PC-9 (cell line): ENCODE measurements at regions of chr4 and their contacts with region 1.

Region 1: DNA sequence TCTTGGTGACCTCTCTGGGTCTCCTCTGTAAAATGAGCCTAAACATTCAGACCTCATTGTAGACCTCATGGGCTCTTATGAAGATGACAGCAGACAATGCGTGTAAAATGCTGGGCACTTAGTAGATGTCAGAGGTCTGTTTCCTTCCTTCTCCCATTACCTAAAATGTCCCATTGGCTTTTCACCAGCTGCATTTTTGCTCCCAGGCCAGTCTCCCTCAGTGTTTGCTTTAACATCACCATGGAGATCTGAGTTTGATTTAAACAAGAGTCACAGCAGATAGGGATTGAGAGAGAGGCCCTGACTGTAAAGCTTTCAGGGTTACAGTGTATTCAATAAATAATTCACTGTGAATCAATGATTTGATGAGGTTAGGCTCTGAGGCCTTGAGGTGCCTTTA is 24.3 kb downstream of the PSAPL1 start:
- DNase-seq: no peak
- H3K4me3 ChIP-seq: no peak overlapping the region
- H3K27ac ChIP-seq: no peak overlapping the region
- H3K4me1 ChIP-seq: no peaks in the 10 kb centered on the region
- H3K27me3 ChIP-seq: no peaks in the 10 kb centered on the region
- CTCF ChIP-seq: no peak

Region 2: GRCh38 chr4:7424553-7425111 is 14.2 kb after region 1 on chr4:
- CTCF ChIA-PET with region 1: no interaction called
- POLR2A ChIA-PET with region 1: interaction called, 14 read pairs
- intact Hi-C with region 1: no loop called
- DNase-seq: no peak
- H3K4me3 ChIP-seq: no peak overlapping the region
- H3K27ac ChIP-seq: no peak overlapping the region
- H3K4me1 ChIP-seq: no peaks in the 10 kb centered on the region
- H3K27me3 ChIP-seq: no peaks in the 10 kb centered on the region
- CTCF ChIP-seq: no peak

Region 3: DNA sequence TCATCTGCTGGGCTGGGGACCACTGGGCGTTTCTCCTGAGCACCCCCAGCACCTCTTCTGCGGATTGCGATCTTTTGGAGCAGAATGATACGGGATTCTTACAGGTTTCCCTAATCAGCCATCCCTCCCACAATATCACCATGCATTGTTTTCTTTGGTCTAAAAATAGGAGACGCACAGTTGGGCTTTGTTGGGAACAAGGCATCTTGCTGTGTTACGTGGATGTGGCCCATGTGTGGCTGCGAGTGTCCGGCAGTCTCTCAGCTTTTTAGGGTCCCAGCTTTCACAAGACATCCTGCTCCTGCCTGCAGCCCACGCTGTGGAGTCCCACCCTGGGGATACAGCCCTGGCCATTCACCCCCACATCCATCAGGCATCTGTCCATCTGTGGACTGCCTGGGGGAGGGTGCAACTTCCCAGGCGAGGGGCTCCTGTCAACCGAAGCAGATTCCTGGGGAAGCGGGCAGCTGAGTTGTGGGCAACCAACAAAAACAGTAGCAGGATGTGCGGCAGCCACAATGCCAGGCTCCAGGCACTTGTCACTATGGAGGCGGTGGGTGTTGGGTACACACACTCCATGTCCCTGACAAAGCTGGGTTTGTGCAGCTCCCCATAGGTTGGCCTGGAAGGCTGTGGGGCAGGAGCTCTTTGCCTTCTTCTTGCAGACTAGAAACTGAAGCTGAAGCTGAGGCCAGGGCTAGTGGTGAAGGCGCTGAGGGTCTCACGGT is 209.8 kb after region 1 on chr4:
- CTCF ChIA-PET with region 1: no interaction called
- POLR2A ChIA-PET with region 1: no interaction called
- intact Hi-C with region 1: no loop called
- DNase-seq: no peak
- H3K4me3 ChIP-seq: no peak overlapping the region
- H3K27ac ChIP-seq: no peak overlapping the region
- H3K4me1 ChIP-seq: no peaks in the 10 kb centered on the region
- H3K27me3 ChIP-seq: no peaks in the 10 kb centered on the region
- CTCF ChIP-seq: no peak